Posterior vena cava (tissue), 2 donors: ENCODE measurements at regions of chrX and their contacts with region 1.

Region 1: GRCh38 chrX:118974088-118974907 is at the start of gene LONRF3:
- DNase-seq: peak; percentile 91
- total RNA-seq, gene LONRF3: 3.1 to 5.7 TPM

Region 2: GRCh38 chrX:119093991-119094737 is 119.9 kb after region 1 on chrX:
- intact Hi-C with region 1: no loop called
- DNase-seq: no peak

Region 3: DNA sequence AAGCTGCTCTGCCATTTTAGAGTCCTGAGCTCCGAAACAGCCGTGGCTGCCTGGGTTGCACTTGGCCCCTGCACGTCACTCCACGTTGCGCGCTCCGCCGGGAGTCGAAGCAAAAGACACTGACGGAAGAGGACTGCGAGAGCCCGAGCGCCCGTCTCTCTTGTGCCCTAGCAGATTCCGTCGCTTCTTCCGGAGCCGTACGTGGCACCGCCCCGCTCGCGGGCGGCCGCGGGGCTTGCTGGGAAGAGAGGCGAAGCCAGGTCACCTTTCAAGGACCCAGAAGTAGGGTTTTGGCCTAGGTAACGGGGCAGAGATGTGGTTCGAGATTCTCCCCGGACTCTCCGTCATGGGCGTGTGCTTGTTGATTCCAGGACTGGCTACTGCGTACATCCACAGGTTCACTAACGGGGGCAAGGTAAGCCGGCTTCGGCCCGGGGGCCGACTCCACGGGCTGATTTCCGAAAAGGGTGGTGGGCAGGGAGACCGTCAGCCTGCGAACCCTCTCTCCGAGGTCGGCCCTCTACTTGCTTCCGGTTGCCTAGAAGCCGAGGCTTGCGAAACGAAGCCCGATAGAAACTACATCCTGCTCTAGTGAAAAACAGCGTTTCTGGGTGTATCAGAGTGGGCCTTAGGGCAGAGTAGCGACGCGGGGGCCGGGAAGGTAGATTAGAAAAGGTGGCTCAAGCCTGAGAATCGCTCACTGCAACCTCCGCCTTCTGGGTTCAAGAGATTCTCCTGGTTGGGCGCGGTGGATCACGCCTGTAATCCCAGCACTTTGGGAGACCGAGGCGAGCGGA is 897.5 kb after region 1 on chrX and contains the starts of genes NDUFA1 and RNF113A:
- intact Hi-C with region 1: loop called in 1 of 2 experiments (anchors 5 kb)
- DNase-seq: peak; percentile 95
- total RNA-seq, gene NDUFA1: 65.9 to 74.7 TPM
- total RNA-seq, gene RNF113A: 8.2 to 10.2 TPM